ENCODE measurements at regions of chr2 and their contacts with region 1.

Region 1: GRCh38 chr2:127342101-127342500 is 45.7 kb downstream of the MAP3K2 start:
- DNase-seq: peak; percentile 31
- H3K4me3 ChIP-seq: no peak overlapping the region
- H3K27ac ChIP-seq: no peak overlapping the region
- H3K4me1 ChIP-seq: peaks cover 8% of the 10 kb centered on the region
- H3K27me3 ChIP-seq: no peaks in the 10 kb centered on the region

Region 2: GRCh38 chr2:126825316-126825715 is 516.8 kb before region 1 on chr2:
- in situ Hi-C with region 1: no loop called
- DNase-seq: no peak
- H3K4me3 ChIP-seq: no peak overlapping the region
- H3K27ac ChIP-seq: no peak overlapping the region
- H3K4me1 ChIP-seq: no peaks in the 10 kb centered on the region
- H3K27me3 ChIP-seq: no peaks in the 10 kb centered on the region; the same call in 1 of the 2 replicates

Region 3: DNA sequence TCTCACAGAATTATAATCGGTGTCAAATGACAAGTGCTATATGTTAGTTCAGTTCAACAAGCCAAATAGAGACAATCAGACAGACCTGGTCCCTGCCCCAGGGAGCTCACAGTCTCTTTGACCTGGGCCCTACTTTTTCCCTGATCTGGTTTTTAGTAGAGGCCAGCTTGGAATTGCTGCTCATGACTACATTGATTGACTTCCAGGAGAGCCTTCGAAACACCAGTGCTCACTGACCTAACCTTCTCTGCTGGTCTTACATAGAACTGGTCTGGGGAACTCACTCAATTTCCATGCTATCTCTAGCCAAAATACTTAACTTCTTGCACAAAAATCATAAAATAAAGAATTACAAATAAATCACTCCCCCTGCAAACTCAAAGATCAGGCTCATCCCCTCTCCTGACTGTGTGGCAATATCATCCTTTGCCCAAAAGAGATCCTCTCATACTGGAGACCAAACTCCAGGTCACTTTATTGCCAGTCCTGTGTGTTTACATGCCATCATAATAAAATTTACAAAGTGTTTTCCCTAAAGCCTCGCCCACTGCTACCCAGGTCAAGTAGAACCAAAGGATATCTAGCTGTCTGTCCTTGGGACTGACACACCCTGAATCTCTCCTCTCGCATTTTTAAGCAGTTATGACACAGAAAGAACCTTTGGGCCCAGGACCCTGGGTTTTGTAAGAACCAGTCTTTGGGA is 129.3 kb after region 1 on chr2:
- in situ Hi-C with region 1: loop called (anchors 5 kb)
- DNase-seq: no peak
- H3K4me3 ChIP-seq: no peak overlapping the region
- H3K27ac ChIP-seq: no peak overlapping the region
- H3K4me1 ChIP-seq: no peaks in the 10 kb centered on the region
- H3K27me3 ChIP-seq: no peaks in the 10 kb centered on the region

Region 4: GRCh38 chr2:127498386-127498785 is 156.3 kb after region 1 on chr2:
- in situ Hi-C with region 1: no loop called
- DNase-seq: peak; percentile 71
- H3K4me3 ChIP-seq: no peak overlapping the region
- H3K27ac ChIP-seq: peak overlapping the region; percentile 36
- H3K4me1 ChIP-seq: peaks cover 8% of the 10 kb centered on the region
- H3K27me3 ChIP-seq: no peaks in the 10 kb centered on the region

Region 5: GRCh38 chr2:127508631-127509034 is 166.5 kb after region 1 on chr2:
- in situ Hi-C with region 1: no loop called
- DNase-seq: peak; percentile 100
- H3K4me3 ChIP-seq: peak overlapping the region; percentile 54
- H3K27ac ChIP-seq: peak overlapping the region; percentile 96
- H3K4me1 ChIP-seq: peaks cover 58% of the 10 kb centered on the region
- H3K27me3 ChIP-seq: no peaks in the 10 kb centered on the region

Measured in GM23248 (cell line).